Endothelial cell of umbilical vein (primary cell): ENCODE measurements at regions of chr10 and their contacts with region 1.

Region 1: DNA sequence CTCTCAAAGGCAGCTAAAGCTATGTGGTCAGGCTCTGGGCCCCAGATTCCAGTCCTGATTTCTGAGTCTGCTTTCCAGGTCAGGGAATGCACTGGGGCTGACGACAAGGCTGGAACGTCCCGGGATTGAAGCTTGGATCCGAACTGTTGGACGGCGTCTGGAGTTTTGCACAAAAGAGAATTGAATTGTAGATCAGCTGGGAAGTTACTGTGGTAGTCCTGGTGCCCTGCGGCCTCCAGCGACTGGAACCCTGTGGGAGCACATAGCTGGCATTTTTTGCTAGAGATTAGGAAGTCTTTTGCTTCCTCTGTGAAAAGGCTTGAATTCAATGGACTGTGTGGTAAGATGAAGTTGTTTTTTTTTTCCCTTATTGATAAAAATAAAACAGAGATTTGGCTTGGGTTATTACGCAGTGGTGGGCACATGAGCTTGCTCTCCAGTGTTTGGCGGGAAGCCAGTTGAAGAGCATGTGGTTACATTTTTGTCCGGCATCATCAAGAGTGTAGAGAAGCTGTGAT is at the start of gene HK1:
- DNase-seq: peak; percentile 53
- H3K4me3 ChIP-seq: no peak within 1 kb of the TSS
- H3K27ac ChIP-seq: no peak within 1 kb of the TSS
- H3K4me1 ChIP-seq: peaks cover 7% of the 10 kb centered on the region
- H3K27me3 ChIP-seq: peaks cover 0 to 2% of the 10 kb centered on the region in 2 experiments
- CTCF ChIP-seq: no peak
- POLR2A ChIP-seq: no peak
- total RNA-seq, gene HK1: 120 and 121 TPM in 2 replicates

Region 2: DNA sequence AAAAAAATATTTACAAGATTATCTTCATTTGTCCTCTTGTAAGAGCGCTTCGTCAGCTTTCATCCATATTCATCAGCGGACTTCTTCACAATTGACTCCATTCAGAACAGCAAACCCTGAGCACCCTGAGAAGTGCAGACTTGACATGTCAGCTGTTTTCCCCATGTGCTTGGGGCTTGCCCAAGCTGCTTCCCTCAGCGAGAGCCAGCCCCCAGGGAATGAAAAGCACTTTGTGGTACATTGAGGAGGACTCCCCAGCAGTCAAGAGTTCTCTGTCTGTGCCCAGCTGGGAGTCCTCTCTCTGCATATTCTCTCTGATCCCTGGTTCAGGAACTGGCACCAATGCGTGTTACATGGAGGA is 35.7 kb before region 1 on chr10:
- CTCF ChIA-PET with region 1: interaction called, 4 read pairs
- POLR2A ChIA-PET with region 1: interaction called, 10 read pairs
- dilution Hi-C with region 1: no loop called
- intact Hi-C with region 1: no loop called
- DNase-seq: no peak
- H3K4me3 ChIP-seq: no peak overlapping the region
- H3K27ac ChIP-seq: no peak overlapping the region
- H3K4me1 ChIP-seq: peaks cover 14% of the 10 kb centered on the region
- H3K27me3 ChIP-seq: no peaks in the 10 kb centered on the region
- CTCF ChIP-seq: no peak
- POLR2A ChIP-seq: no peak